PC-3 (cell line): ENCODE measurements at regions of chr3 and their contacts with region 1.

Region 1: GRCh38 chr3:16837602-16838001 is 47.2 kb upstream of the PLCL2 start:
- DNase-seq: no peak
- ATAC-seq: no peak
- H3K4me3 ChIP-seq: no peak overlapping the region
- H3K27ac ChIP-seq: no peak overlapping the region
- H3K4me1 ChIP-seq: peaks cover 15% of the 10 kb centered on the region
- H3K27me3 ChIP-seq: no peaks in the 10 kb centered on the region
- CTCF ChIP-seq: no peak

Region 2: GRCh38 chr3:16864610-16865313 is 27.2 kb after region 1 on chr3:
- CTCF ChIA-PET with region 1: no interaction called
- POLR2A ChIA-PET with region 1: no interaction called
- intact Hi-C with region 1: no loop called
- DNase-seq: peak; percentile 89
- ATAC-seq: peak; percentile 91
- H3K4me3 ChIP-seq: peak overlapping the region; percentile 27; the same call in 1 of the 2 replicates
- H3K27ac ChIP-seq: peak overlapping the region; percentile 59
- H3K4me1 ChIP-seq: peaks cover 24% of the 10 kb centered on the region
- H3K27me3 ChIP-seq: no peaks in the 10 kb centered on the region
- CTCF ChIP-seq: no peak

Region 3: DNA sequence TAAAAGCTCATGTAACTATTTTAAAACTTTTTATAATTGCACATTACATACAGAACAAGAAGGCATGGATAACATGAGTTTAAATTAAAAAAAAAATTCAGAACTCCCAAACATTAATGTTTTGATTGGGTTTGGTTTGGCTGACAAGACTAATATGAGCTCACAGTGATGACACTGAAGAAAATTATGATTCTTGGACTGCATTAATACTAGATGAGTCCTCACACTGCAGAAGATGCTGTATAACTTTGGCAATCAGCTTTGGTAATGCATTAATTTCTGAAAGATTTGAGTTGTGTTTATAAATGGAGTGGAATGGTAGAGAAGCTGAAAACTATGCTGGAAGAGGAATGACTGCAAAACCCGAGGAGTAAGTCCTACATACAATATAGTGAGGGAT is 406.0 kb after region 1 on chr3:
- CTCF ChIA-PET with region 1: interaction called, 10 read pairs
- POLR2A ChIA-PET with region 1: no interaction called
- intact Hi-C with region 1: no loop called
- DNase-seq: no peak
- ATAC-seq: no peak
- H3K4me3 ChIP-seq: no peak overlapping the region
- H3K27ac ChIP-seq: no peak overlapping the region
- H3K4me1 ChIP-seq: no peaks in the 10 kb centered on the region
- H3K27me3 ChIP-seq: no peaks in the 10 kb centered on the region
- CTCF ChIP-seq: no peak